ENCODE measurements at regions of chr12 and their contacts with region 1.

Region 1: DNA sequence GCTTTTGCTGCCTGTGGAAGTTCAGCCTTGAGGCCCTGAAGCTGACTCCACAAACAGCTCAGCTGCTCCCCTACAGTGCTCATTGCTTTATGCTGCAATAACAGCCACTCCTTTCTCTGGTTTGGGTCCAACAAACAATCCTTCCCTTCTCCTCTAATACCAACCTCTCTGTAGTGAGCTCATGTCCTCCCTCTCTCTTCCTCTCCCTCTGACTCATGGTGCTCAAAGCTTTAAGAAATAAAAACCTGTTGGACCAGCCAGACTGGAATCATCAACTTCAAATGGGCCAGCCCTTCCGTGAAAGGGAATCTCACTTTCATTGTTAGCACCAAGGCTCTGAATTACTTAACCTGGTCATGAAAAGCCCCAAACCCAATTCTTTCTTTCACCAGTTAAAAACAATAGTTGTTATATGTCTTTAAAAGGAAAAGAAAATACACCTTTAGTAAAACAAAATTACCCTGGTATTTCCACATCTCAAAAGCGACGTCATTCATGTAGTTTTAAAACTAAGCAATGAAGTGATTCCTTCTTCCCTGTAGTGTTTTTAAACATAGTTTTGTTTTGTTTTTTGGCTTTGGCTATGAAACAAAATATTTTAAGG is 126.4 kb downstream of the DUSP6 start:
- DNase-seq: no peak
- H3K4me3 Mint-ChIP-seq: peak overlapping the region; percentile 73
- H3K27ac Mint-ChIP-seq: peak overlapping the region; percentile 99
- H3K4me1 Mint-ChIP-seq: peaks cover 82% of the 10 kb centered on the region
- H3K27me3 Mint-ChIP-seq: no peaks in the 10 kb centered on the region

Region 2: GRCh38 chr12:89040146-89040964 is 185.6 kb before region 1 on chr12:
- intact Hi-C with region 1: loop called (anchors 1 kb)
- DNase-seq: peak; percentile 79
- H3K4me3 Mint-ChIP-seq: peak overlapping the region; percentile 61
- H3K27ac Mint-ChIP-seq: peak overlapping the region; percentile 95
- H3K4me1 Mint-ChIP-seq: peaks cover 65% of the 10 kb centered on the region
- H3K27me3 Mint-ChIP-seq: no peaks in the 10 kb centered on the region

Region 3: GRCh38 chr12:89135976-89136634 is 89.8 kb before region 1 on chr12:
- intact Hi-C with region 1: loop called (anchors 1 kb)
- DNase-seq: no peak
- H3K4me3 Mint-ChIP-seq: no peak overlapping the region
- H3K27ac Mint-ChIP-seq: peak overlapping the region; percentile 58
- H3K4me1 Mint-ChIP-seq: peaks cover 33% of the 10 kb centered on the region
- H3K27me3 Mint-ChIP-seq: peaks cover 2% of the 10 kb centered on the region

Region 4: DNA sequence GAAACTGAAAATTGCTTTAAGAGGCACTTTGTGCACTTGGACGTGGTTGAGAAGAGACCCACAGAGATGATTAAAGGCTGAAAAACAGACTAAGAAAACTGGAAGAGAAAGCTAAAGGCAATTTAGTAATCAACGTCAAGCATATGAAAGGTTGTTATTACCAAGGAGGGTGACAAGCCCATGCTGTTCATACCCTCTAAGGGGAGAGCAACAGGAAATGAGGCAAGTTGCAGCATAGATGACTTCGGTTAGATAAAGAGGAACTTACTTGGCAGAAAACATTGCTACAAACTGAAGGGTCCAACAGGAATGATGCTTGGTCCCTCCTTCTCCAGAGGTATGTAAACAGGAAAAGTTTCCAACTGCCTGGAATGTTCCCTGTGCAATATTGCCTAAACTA is 18.6 kb after region 1 on chr12:
- intact Hi-C with region 1: loop called (anchors 1 kb)
- DNase-seq: peak; percentile 45
- H3K4me3 Mint-ChIP-seq: peak overlapping the region; percentile 32
- H3K27ac Mint-ChIP-seq: peak overlapping the region; percentile 84
- H3K4me1 Mint-ChIP-seq: peaks cover 53% of the 10 kb centered on the region
- H3K27me3 Mint-ChIP-seq: no peaks in the 10 kb centered on the region

Region 5: DNA sequence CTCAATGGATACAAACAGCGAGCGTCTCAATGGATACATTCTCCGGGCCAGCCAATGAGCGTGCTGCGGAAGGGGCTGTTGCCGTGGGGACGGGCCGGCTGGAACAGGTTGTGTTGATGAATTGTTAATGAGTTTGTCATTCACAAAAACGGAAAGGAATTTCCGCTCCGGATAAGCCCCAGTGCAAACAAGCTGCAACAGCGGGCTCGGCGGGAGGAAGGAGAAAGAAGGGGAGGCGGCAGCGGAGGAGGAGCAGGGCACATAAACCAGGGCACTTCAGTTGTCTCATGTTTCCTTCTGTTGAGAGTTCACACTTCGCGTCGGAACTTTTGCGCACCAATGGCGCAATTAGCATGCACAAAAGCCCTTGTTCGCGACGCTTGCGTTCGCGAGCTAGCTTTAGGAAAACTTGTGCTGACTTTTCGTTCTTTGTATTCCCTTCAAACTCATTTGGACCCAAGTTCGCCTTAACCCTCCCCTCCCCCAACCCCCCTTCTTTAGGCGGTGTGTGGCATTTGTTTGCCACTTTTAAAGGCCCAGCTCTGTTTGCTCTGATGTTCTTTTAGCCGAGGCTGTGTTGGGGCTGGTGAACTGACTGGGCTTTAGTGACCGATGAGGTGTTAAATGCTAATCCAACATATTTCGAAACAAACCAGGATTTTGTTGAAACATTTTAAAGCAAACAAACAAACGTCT is 126.7 kb after region 1 on chr12 and contains the start of gene DUSP6:
- intact Hi-C with region 1: loop called (anchors 1 kb)
- DNase-seq: peak; percentile 92
- H3K4me3 Mint-ChIP-seq: peak within 1 kb of the TSS; percentile 98
- H3K27ac Mint-ChIP-seq: peak within 1 kb of the TSS; percentile 97
- H3K4me1 Mint-ChIP-seq: peaks cover 46% of the 10 kb centered on the region
- H3K27me3 Mint-ChIP-seq: peaks cover 3% of the 10 kb centered on the region
- total RNA-seq, gene DUSP6: 108 and 115 TPM in 2 replicates

Region 6: DNA sequence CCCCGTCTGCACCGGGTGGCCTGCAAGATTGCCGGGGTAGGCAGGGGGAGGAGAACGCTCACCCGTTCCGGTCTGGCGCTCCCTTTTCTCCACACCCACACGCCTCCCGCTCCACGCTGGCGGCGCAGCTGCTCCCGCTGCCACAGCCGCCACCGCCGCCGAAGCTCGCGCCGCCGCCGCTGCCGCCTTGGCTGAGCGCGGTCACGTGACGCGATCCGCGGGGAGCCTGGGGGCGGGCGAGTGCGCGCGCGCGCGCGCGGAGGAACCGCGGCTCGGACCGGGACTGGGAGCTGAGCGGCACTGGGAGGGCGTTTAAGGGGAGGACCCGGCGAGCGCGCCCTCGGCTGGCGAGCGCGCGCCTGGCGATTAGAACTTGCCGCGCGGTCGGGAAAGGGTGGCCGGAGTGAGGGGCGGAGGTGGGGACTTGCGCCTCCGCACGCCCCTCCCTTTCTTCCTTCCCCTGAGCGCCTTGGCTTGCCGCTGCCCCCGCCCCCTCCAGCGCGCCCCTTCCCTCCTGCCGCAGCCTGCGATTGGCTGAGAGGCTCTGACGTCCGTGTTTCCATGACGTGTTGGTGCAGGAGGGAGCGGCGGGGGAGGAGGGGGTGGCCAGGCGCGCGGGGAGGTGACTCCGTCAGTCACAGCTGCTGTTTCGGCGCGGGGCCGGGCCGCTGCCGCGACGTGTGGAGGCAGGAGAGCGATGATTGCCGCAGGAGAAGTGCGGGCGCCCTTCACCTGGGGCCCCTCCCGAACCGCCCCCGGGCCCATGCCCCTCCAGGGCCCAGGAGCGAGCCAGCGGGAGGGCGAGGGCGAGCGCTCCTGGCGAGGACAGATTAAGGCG is 483.5 kb after region 1 on chr12:
- intact Hi-C with region 1: loop called (anchors 5 kb)
- DNase-seq: peak; percentile 97
- H3K4me3 Mint-ChIP-seq: peak overlapping the region; percentile 81
- H3K27ac Mint-ChIP-seq: peak overlapping the region; percentile 91
- H3K4me1 Mint-ChIP-seq: peaks cover 26% of the 10 kb centered on the region
- H3K27me3 Mint-ChIP-seq: peaks cover 31% of the 10 kb centered on the region